ENCODE measurements at regions of chr11 and their contacts with region 1.

Region 1: GRCh38 chr11:35318977-35319925 is 100.1 kb downstream of the SLC1A2 start:
- DNase-seq: peak; percentile 49
- H3K4me3 ChIP-seq: no peak overlapping the region
- H3K27me3 ChIP-seq: no peaks in the 10 kb centered on the region
- CTCF ChIP-seq: no peak

Region 2: DNA sequence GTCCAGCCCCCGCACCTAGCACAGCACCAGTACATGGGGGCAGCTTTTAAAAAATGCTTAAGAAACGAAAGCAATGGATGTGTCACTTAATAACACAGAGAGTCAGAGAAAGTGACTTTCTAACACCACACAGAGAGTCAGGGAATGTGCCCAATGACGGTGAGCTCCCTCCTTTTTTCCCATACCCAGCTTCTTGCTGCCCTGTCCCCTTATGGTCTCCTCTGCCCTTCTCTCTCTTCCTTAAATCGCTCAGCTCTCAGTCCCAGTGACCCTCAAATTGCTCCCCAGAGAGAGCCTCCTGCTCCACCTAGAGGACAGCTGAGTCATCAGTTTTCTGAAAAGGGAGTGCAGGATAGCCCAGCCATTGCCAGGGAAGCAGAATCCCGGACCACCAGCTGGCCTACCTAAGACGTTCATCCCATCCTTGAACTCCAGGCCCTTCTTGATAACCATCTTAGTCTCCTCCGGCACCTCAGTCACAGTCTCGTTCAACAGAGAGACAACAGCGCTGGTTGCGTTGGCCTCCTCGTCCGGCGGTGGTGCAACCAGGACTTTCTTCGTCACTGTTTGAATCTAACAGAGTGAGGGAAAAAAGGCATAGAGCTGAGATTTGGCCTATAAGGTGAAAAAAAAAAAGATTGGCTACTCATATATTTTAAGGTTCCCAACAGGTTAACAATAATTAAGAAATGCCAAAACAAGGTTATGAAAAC is 13.4 kb before region 1 on chr11:
- CTCF ChIA-PET with region 1: interaction called, 15 read pairs
- POLR2A ChIA-PET with region 1: no interaction called
- DNase-seq: no peak
- H3K4me3 ChIP-seq: no peak overlapping the region
- H3K27me3 ChIP-seq: no peaks in the 10 kb centered on the region
- CTCF ChIP-seq: peak; percentile 60